Sigmoid colon (tissue), 7 donors: ENCODE measurements at regions of chr9 and their contacts with region 1.

Region 1: DNA sequence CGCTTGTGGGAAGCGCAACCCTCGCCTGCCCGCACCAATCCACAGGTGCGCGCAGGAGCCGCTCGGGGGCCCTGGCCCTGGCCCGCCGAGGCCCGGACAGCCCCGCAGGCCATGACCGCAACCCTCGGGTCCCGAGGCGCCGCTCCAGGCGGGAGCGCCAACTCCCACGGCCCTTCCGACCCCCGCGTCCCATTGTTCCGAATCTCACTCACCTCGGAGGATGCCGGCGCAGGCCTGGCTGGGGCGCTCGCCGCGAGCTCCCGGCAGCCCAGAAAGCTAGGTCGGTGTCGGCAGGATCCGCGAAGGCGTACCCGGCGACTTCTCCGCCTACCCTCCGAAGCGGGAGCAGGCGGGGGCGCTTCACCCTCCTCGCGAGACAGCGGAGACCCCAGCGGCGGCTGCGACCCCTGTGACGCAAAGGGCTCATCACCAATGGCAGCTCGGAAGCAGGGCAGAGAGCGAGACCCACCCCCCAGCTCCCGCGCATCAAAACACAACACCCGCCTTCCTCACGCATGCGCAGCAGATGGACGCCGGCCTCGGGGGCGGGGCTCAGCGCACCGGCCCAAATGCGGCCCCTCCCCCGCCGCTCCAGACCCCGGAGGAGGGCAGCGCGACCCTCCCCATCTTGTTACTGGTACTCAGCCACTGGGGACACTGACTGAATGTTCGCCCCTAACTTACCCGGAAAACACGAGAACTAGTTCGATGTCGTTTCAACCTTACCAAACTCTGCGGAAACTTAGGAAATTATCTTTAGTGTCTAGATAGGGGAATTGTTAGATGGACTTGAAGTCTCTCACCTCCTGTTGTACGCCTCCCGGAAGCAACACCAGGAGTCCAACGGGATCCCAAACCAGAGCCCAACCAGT is 1.3 kb upstream of the SMIM27 start:
- DNase-seq: peak; percentile 97
- H3K4me3 ChIP-seq: peak overlapping the region; percentile 62 to 93 (median 84)
- H3K27ac ChIP-seq: peak overlapping the region; percentile 89 to 99 (median 94)
- H3K4me1 ChIP-seq: peaks cover 0 to 32% (median 25%) of the 10 kb centered on the region in 4 donors
- H3K27me3 ChIP-seq: no peaks in the 10 kb centered on the region
- CTCF ChIP-seq: no peak
- EP300 ChIP-seq: peak in 2 of 4 donors; percentile 20 to 46
- POLR2A ChIP-seq: peak; percentile 25 to 29

Region 2: DNA sequence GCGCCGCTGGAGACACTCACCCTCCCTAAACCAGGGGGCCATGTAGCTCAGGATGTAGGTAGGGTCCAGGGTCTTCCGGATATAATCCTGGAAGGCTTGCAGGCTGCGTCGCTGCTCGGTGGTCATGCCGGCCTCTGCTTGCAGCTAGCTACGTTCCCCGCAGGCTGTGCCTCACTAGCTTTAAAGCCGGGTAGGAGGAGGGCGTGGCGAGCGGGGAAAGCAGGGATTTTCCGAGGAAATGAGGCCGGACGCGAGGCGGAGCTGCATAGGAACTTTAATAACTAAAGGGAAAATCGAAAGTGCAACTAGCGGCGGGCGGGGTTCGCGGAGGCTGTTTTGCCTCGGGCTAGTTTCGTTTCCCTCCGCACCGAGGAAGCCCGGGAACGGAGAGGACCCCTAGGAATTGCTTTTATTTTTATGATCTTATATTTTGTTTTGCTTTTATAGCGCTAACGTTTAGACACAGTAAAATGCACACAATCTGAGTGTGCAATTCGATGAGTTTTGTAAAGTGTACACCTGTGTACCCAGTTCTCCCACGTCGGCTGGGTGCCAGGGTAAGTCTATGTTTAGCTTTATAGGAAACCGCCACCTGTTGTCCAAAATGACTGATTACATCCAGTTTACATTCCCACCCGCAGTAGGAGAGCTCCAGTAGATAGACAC is 24.6 kb before region 1 on chr9 and contains the start of gene RIGI:
- intact Hi-C with region 1: loop called (anchors 2 kb)
- DNase-seq: peak; percentile 96
- H3K4me3 ChIP-seq: peak within 1 kb of the TSS; percentile 55 to 69 (median 62)
- H3K27ac ChIP-seq: peak within 1 kb of the TSS; percentile 83 to 91 (median 86)
- H3K4me1 ChIP-seq: peaks cover 0 to 33% (median 20%) of the 10 kb centered on the region in 4 donors
- H3K27me3 ChIP-seq: no peaks in the 10 kb centered on the region
- CTCF ChIP-seq: peak in 1 of 4 experiments; percentile 26
- EP300 ChIP-seq: no peak
- POLR2A ChIP-seq: peak; percentile 43 to 60
- total RNA-seq, gene RIGI: 9.4 to 19.6 (median 13.9) TPM

Region 3: DNA sequence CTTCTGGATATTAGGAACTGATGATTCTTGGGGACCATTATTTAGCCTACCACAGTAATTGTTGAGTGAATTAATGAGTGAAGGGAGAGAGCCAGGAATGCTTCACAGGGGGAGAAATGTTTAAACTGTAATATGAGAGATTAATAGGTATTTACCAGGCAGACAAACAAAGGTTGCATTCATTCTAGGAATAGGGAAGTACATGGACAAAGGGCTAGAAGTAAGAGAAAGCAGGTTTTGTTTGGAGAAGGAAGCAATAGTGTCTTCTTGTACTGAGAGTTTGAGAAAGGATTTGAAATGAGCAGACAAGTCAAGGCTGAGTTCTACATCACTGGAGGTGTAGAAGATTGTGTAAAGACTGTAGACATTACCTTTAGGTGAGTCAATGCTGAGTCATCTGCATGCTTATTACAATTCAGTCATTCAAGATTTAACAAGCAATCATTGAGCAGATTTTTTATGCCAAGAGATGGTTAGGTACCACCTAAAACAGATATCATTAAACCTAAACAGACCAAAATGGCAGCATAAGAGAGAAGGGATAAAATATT is 76.7 kb after region 1 on chr9:
- intact Hi-C with region 1: no loop called
- DNase-seq: no peak
- H3K4me3 ChIP-seq: no peak overlapping the region
- H3K27ac ChIP-seq: no peak overlapping the region
- H3K4me1 ChIP-seq: no peaks in the 10 kb centered on the region
- H3K27me3 ChIP-seq: no peaks in the 10 kb centered on the region
- CTCF ChIP-seq: no peak
- EP300 ChIP-seq: no peak
- POLR2A ChIP-seq: no peak